RWPE1 (cell line): ENCODE measurements at regions of chr3 and their contacts with region 1.

Region 1: DNA sequence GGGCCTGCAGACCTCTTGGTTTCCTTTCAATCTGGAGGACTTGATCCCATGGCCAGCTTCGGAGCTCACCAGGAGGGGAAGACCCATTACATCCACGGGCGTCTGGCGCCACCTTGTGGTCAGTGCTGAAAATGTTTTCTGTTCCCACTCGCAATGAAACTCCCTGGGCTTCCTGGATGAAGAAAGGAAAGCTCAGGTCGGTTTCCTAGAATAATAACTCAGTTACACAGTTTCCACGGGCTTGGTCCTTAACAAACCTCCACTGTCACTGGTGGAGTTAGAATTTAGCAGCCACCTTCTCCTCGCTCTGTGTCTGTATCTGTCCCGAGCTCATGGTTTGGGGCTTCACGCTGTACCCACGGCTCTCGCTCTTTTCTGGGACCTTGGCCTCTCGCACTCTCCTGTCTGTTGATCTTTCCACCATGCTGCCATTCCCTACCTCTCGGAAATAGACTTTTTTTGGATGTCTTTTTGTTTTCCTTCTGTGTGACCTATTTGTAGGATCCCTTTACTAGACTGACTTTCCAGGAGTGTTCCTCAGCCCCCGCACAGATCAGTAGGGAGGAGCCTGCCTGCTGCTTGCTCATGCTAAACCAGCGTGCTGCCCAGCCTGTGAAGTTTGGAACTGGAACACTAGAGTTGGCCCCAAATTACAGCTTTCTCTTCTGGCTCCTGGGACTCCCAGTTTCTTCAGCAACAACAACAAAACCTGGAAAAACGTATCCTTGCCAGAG is 56.3 kb downstream of the IL20RB start:
- DNase-seq: peak; percentile 85
- H3K27ac ChIP-seq: peak overlapping the region; percentile 75
- CTCF ChIP-seq: peak; percentile 81

Region 2: GRCh38 chr3:136957751-136958288 is 56.3 kb before region 1 on chr3 and contains the start of gene IL20RB:
- CTCF ChIA-PET with region 1: interaction called, 10 read pairs
- POLR2A ChIA-PET with region 1: no interaction called
- DNase-seq: peak; percentile 82
- H3K27ac ChIP-seq: peak within 1 kb of the TSS; percentile 97
- CTCF ChIP-seq: no peak

Region 3: DNA sequence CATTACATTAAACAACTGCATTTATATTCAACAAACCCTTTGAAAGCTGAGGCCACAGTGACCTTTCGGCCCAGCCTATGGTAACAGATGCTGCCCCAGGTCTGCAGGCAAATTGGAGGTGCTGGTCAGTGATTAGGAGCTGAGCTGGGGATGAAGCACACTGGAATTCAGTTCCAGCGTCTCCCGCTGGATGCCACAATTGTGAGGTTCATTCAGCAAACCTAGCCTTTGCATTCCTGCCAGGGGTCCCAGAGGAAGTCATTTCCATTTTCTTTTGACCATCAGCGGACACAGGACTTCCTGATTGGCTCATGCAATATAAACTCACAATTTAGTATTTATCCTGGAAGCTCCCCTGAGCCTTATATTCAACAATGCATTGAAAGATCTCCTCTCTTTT is 33.1 kb after region 1 on chr3:
- CTCF ChIA-PET with region 1: no interaction called
- POLR2A ChIA-PET with region 1: no interaction called
- DNase-seq: no peak
- H3K27ac ChIP-seq: no peak overlapping the region
- CTCF ChIP-seq: no peak

Region 4: GRCh38 chr3:137084586-137084985 is 70.5 kb after region 1 on chr3:
- CTCF ChIA-PET with region 1: no interaction called
- POLR2A ChIA-PET with region 1: no interaction called
- DNase-seq: no peak
- H3K27ac ChIP-seq: no peak overlapping the region
- CTCF ChIP-seq: no peak

Region 5: GRCh38 chr3:137148917-137149316 is 134.8 kb after region 1 on chr3:
- CTCF ChIA-PET with region 1: no interaction called
- POLR2A ChIA-PET with region 1: no interaction called
- DNase-seq: no peak
- H3K27ac ChIP-seq: no peak overlapping the region
- CTCF ChIP-seq: no peak